Activated naive CD4-positive, alpha-beta T cell treated with anti-CD3 and anti-CD28 coated beads, Interleukin-2, amount 10 ng/mL, durations not matched to agents 7 days and 5 days (primary cell): ENCODE measurements at regions of chr9 and their contacts with region 1.

Region 1: DNA sequence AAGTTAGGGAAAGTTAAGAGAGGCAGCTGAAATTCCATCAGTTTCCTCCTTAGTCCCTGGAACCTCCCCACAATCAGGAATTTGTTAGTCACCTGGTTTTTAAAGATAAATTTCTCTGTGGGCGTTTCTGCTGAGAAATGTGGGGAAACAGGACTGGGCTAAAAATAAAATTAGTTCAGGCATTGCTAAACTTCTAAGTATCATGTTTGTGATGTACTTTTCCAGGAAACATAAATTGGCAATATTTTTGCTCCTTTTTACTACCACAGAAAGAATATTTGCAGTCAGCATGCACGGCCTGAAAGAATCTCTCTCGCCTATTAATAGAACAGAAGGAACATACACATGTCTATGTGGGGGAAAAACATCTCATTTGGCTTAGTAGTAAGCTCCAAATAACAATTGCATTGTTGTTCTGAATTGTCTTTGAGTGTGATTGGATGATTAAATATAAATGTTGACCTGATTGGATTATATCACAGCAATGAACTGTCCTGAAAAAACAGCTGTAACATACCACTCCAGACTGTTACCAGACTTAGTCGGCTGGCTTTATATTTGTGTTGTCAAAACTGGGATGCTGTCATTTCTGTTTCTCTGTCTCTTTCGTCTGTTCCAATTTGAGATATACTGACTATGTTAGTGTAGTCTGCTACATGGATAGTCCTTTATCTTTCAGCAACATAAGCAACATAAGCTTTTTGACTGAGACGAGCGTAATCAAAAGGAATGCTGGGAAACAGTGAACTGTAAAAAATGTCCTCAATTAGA is 12.9 kb downstream of the TJP2 start:
- DNase-seq: no peak
- H3K4me3 Mint-ChIP-seq: no peak overlapping the region
- H3K27ac Mint-ChIP-seq: peak overlapping the region; percentile 3
- H3K4me1 Mint-ChIP-seq: peaks cover 34% of the 10 kb centered on the region
- H3K27me3 Mint-ChIP-seq: no peaks in the 10 kb centered on the region

Region 2: GRCh38 chr9:68793605-68794343 is 393.3 kb before region 1 on chr9:
- CTCF ChIA-PET with region 1: no interaction called
- DNase-seq: no peak
- H3K4me3 Mint-ChIP-seq: no peak overlapping the region
- H3K27ac Mint-ChIP-seq: no peak overlapping the region
- H3K4me1 Mint-ChIP-seq: peaks cover 3% of the 10 kb centered on the region
- H3K27me3 Mint-ChIP-seq: no peaks in the 10 kb centered on the region

Region 3: DNA sequence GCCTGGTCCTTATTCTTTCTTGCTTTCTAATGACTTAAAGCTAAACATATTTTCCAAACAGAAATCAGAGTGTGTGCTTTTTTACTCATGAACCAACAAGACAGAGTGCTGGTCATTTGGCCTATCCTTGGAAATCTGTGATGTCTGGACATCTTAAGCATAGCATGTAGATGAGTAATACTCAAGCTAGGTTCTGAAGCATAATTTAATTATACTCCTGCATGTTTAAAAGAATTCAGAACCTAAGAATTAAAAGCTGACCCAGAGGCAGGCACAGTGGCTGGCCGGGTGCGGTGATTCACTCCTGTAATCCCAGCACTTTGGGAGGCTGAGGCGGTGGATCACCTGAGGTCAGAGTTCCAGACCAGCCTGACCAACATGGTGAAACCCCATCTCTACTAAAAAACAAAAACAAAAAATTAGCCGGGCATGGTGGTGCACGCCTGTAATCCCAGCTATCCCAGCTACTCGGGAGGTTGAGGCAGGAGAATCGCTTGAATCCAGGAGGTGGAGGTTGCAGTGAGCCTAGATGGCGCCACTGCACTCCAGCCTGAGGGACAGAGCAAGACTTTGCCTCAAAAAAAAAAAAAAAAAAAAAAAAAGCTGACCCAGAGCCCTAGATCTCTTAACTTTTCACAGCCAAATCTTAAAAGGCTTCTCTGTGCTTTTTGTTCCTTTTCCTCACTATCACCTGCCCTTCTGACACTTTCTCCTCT is 29.1 kb before region 1 on chr9:
- CTCF ChIA-PET with region 1: interaction called, 44 read pairs
- DNase-seq: peak; percentile 35
- H3K4me3 Mint-ChIP-seq: no peak overlapping the region
- H3K27ac Mint-ChIP-seq: no peak overlapping the region
- H3K4me1 Mint-ChIP-seq: no peaks in the 10 kb centered on the region
- H3K27me3 Mint-ChIP-seq: no peaks in the 10 kb centered on the region

Region 4: DNA sequence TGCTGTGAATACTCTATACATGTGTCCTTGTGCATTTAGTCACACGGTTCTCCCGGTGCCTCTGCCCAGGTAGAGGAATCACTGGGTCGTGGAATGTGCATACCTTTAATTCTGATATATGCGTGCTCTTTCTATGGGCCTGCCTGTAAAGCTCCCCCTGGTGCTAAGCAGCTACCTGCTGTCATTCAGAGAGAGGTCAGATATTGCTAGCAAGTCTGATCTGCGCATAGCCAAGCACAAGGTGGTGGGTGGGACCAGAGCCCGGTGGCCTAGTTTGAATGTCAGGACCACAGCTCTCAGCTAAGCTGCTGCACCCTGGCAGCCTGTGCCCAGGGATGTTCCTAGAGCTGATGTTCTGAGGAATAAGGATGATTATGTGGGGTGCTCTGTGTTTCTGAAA is 20.5 kb after region 1 on chr9:
- CTCF ChIA-PET with region 1: no interaction called
- DNase-seq: no peak
- H3K4me3 Mint-ChIP-seq: no peak overlapping the region
- H3K27ac Mint-ChIP-seq: no peak overlapping the region
- H3K4me1 Mint-ChIP-seq: no peaks in the 10 kb centered on the region
- H3K27me3 Mint-ChIP-seq: no peaks in the 10 kb centered on the region

Region 5: DNA sequence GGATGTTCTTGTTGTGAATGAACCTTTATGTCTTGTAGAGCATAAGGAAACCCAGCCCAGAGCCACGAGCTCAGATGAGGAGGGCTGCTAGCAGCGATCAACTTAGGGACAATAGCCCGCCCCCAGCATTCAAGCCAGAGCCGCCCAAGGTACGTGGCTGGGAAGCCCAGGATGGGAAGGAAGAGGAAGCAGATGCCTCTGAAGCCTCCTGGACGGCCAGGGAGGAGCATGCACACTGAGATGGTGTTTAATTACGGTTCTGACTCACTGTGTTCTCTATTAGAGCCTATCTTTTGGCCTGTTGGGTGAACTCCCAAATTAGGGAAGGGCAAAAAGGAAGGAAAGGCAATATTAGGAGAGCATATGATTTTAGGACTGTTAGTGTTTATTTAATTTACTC is 62.3 kb after region 1 on chr9:
- CTCF ChIA-PET with region 1: no interaction called
- DNase-seq: no peak
- H3K4me3 Mint-ChIP-seq: no peak overlapping the region
- H3K27ac Mint-ChIP-seq: no peak overlapping the region
- H3K4me1 Mint-ChIP-seq: no peaks in the 10 kb centered on the region
- H3K27me3 Mint-ChIP-seq: no peaks in the 10 kb centered on the region